ENCODE measurements at regions of chr15 and their contacts with region 1.

Region 1: GRCh38 chr15:70875001-70875782 is 17.0 kb downstream of the THAP10 start:
- DNase-seq: peak in 1 of 2 experiments; percentile 26
- H3K4me3 ChIP-seq: no peak overlapping the region
- H3K4me3 Mint-ChIP-seq: no peak overlapping the region
- H3K27ac Mint-ChIP-seq: no peak overlapping the region
- H3K4me1 ChIP-seq: peaks cover 13% of the 10 kb centered on the region
- H3K4me1 Mint-ChIP-seq: peaks cover 17% of the 10 kb centered on the region
- H3K27me3 ChIP-seq: no peaks in the 10 kb centered on the region
- H3K27me3 Mint-ChIP-seq: peaks cover 2% of the 10 kb centered on the region
- CTCF ChIP-seq: peak in 1 of 2 experiments; percentile 45

Region 2: GRCh38 chr15:70812827-70813364 is 62.3 kb before region 1 on chr15:
- CTCF ChIA-PET with region 1: interaction called, 11 read pairs
- POLR2A ChIA-PET with region 1: no interaction called
- intact Hi-C with region 1: no loop called
- DNase-seq: no peak
- H3K4me3 ChIP-seq: no peak overlapping the region
- H3K4me3 Mint-ChIP-seq: peak overlapping the region; percentile 72
- H3K27ac Mint-ChIP-seq: no peak overlapping the region
- H3K4me1 ChIP-seq: no peaks in the 10 kb centered on the region
- H3K4me1 Mint-ChIP-seq: peaks cover 25% of the 10 kb centered on the region
- H3K27me3 ChIP-seq: no peaks in the 10 kb centered on the region
- H3K27me3 Mint-ChIP-seq: no peaks in the 10 kb centered on the region
- CTCF ChIP-seq: no peak

Region 3: GRCh38 chr15:70825841-70826240 is 49.4 kb before region 1 on chr15:
- CTCF ChIA-PET with region 1: interaction called, 16 read pairs
- POLR2A ChIA-PET with region 1: no interaction called
- intact Hi-C with region 1: loop called (anchors 1 kb)
- DNase-seq: no peak
- H3K4me3 ChIP-seq: no peak overlapping the region
- H3K4me3 Mint-ChIP-seq: no peak overlapping the region
- H3K27ac Mint-ChIP-seq: no peak overlapping the region
- H3K4me1 ChIP-seq: peaks cover 24% of the 10 kb centered on the region
- H3K4me1 Mint-ChIP-seq: peaks cover 24% of the 10 kb centered on the region
- H3K27me3 ChIP-seq: no peaks in the 10 kb centered on the region
- H3K27me3 Mint-ChIP-seq: no peaks in the 10 kb centered on the region
- CTCF ChIP-seq: no peak

Region 4: DNA sequence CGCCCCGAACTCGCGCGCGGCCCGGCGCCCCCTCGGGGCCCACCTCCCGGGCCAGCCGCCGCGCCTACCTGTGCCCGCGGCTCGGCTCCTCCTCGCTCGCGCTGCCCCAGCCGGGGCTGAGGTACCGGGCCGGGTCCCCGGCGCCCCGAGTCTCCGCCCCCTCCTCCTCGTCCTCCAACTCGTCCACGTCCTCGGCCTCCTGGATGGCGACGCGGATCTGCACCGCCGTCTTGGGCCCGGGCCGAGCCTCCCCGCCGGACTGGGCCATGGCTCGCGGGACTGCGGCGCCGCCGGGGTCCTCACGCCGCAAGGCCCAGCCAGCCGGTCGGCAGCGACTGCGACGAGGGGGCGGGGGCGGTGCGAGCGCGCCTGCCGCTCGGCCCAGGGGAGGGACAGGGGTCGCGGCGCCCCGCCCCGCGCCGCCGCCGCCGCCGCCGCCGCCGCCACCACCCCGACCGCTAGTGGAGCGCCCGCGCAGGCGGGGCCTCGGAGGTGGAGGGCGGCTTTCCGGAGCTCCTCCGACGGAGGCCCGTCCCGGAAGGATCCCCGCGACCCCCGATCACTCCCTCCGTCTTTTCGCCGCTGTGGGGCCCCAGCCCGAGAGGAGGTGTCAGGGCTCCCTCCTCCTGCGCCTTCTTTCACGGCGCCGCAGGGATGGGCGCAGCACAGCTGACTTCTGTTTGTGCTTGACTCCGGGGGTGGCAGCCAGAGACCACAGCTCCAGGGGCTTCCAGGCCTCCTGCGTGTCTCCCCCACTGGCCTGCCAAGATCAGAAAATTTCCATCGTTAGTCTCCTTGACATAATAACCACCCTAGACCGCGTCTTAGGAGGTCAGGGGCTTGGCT is 21.1 kb before region 1 on chr15 and contains the start of gene LARP6:
- CTCF ChIA-PET with region 1: interaction called, 7 read pairs
- POLR2A ChIA-PET with region 1: no interaction called
- intact Hi-C with region 1: loop called (anchors 1 kb)
- DNase-seq: peak; percentile 58 to 80
- H3K4me3 ChIP-seq: peak within 1 kb of the TSS; percentile 81
- H3K4me3 Mint-ChIP-seq: peak within 1 kb of the TSS; percentile 94
- H3K27ac Mint-ChIP-seq: peak within 1 kb of the TSS; percentile 76
- H3K4me1 ChIP-seq: no peaks in the 10 kb centered on the region
- H3K4me1 Mint-ChIP-seq: peaks cover 9% of the 10 kb centered on the region
- H3K27me3 ChIP-seq: no peaks in the 10 kb centered on the region; the same call in 1 of the 2 replicates
- H3K27me3 Mint-ChIP-seq: no peaks in the 10 kb centered on the region
- CTCF ChIP-seq: no peak
- total RNA-seq, gene LARP6: 19.7 and 19.8 TPM in 2 replicates

Region 5: DNA sequence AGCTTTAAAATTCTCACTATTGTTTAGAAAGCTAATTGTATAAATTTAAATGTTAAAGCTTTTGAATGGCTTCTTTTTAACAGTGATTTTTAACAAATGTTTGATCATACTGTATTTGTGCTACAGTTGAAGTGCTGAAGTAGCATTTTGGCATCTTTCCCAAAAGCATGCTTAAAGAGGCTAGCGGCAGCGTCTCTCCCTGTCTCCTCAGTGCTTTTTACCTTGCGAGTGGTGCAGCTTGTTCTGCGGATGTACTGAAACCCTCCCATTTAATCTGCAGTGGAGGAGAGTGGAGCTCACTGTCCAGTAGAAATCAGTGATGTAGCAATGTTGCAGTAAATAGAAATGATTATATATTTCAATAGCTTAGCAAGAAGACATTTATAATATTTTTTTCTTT is 61.1 kb after region 1 on chr15:
- CTCF ChIA-PET with region 1: no interaction called
- POLR2A ChIA-PET with region 1: no interaction called
- intact Hi-C with region 1: no loop called
- DNase-seq: no peak
- H3K4me3 ChIP-seq: no peak overlapping the region
- H3K4me3 Mint-ChIP-seq: no peak overlapping the region
- H3K27ac Mint-ChIP-seq: no peak overlapping the region
- H3K4me1 ChIP-seq: no peaks in the 10 kb centered on the region
- H3K4me1 Mint-ChIP-seq: no peaks in the 10 kb centered on the region
- H3K27me3 ChIP-seq: no peaks in the 10 kb centered on the region
- H3K27me3 Mint-ChIP-seq: peaks cover 2% of the 10 kb centered on the region
- CTCF ChIP-seq: no peak